Posterior vena cava (tissue), 2 donors: ENCODE measurements at regions of chr1 and their contacts with region 1.

Region 1: DNA sequence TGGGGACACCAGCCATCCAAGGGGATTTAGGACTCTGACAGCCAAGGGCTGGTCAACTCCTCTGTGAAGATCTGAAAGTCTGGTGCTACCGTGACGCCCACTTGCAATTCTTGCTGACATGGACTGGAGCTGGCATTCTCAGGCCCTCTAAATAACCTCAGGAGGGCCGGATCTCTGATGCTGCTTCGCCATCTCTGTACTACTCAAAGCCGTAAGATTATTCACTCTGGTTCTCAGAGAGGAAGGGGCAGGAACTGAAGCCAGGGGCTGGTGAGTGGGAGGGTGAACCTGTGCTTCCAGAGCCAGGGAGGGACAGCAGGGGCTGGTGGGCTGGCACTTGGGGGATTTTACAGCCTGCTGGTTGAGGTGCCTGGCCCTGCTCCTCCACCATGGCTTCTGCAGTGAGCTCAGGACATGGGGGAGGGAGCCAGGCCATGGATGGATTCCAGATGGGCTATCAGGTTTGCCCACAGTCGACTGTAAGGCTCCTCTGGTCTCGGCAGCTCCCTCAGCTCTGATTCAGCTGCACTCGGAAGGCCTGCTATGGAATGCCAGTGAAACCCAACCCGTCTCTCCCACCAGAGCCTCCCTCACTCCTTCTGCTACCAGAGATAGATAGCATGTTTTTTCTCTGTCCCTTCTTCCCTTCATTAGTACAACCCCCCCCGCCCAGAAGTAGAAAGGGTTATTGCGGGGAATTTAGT is 84.5 kb downstream of the PLXNA2 start:
- DNase-seq: no peak

Region 2: DNA sequence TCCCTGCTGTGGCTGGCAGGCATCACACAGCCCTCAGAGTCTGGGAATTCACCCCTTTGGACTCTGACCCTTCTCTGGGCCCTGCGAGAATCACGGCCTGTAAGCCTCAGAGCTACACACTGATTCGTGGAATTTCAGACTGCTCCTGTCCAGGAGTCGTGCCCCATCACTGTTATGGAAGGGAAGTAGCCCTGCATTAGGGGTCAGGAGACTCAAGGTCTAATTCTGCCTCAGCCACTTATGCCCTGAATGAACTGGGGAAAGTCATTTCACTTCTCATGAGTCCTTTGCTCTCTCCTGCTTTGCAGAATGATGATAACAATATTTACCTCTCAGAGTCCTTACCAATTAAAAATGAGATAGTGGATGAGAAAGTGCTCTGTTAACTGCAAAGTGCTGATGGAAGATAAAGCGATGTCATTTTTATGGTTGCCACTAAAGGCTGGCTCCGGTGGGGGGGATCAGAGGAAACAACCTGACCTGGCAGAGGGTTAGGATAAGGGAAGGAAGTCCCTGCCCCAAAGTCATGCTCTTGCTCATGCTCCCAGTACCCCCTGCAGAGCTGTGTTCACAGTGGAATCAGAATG is 100.2 kb before region 1 on chr1:
- intact Hi-C with region 1: loop called in 1 of 2 experiments (anchors 1 kb)
- DNase-seq: peak; percentile 53

Region 3: DNA sequence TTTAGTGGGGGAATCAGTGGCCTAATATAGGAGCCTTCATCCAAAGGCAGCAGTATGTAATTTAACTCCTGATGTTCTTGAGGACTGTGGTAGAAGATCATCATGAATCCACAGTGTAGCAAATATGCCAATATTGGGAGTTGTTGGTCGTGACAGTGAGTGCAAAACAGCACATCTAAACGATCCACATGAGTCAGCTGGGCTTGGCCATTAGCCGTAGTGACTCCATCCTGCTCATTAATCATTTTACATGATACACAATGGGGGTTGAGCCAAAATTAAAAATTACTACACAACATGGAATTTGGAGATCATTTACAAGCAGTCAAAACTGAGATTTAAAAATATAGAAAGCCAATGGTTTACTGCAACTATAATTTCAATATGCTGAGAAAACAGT is 769.9 kb after region 1 on chr1:
- intact Hi-C with region 1: loop called in 1 of 2 experiments (anchors 10 kb)
- DNase-seq: no peak